OCI-LY7 (cell line): ENCODE measurements at regions of chr6 and their contacts with region 1.

Region 1: DNA sequence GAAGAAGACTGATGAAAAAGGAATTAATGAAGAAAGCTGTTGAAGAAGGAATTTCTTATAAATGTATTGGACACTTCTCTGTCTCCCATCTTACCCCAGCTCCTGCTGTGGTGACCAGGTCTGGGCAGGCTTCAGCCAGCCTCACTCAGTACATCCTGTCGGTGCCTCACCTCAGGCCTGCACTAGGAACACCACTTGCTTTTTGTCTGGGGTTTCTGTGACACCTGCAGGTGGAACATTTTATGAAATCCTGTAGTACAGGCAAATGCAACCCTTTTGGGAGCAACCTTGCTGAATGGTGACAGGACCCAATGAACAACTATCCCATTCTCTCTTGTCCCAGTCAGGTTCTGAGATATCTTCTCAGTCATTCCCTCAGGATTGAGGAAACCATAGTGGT is 129.7 kb downstream of the PRDM13 start:
- DNase-seq: peak; percentile 11
- H3K4me3 ChIP-seq: no peak overlapping the region
- H3K27ac ChIP-seq: no peak overlapping the region
- H3K4me1 ChIP-seq: no peaks in the 10 kb centered on the region
- CTCF ChIP-seq: no peak

Region 2: GRCh38 chr6:99761711-99762110 is 25.4 kb after region 1 on chr6:
- CTCF ChIA-PET with region 1: no interaction called
- POLR2A ChIA-PET with region 1: no interaction called
- intact Hi-C with region 1: loop called (anchors 1 kb)
- DNase-seq: no peak
- H3K4me3 ChIP-seq: no peak overlapping the region
- H3K27ac ChIP-seq: no peak overlapping the region
- H3K4me1 ChIP-seq: no peaks in the 10 kb centered on the region
- CTCF ChIP-seq: no peak